H1 (cell line): ENCODE measurements at regions of chr1 and their contacts with region 1.

Region 1: DNA sequence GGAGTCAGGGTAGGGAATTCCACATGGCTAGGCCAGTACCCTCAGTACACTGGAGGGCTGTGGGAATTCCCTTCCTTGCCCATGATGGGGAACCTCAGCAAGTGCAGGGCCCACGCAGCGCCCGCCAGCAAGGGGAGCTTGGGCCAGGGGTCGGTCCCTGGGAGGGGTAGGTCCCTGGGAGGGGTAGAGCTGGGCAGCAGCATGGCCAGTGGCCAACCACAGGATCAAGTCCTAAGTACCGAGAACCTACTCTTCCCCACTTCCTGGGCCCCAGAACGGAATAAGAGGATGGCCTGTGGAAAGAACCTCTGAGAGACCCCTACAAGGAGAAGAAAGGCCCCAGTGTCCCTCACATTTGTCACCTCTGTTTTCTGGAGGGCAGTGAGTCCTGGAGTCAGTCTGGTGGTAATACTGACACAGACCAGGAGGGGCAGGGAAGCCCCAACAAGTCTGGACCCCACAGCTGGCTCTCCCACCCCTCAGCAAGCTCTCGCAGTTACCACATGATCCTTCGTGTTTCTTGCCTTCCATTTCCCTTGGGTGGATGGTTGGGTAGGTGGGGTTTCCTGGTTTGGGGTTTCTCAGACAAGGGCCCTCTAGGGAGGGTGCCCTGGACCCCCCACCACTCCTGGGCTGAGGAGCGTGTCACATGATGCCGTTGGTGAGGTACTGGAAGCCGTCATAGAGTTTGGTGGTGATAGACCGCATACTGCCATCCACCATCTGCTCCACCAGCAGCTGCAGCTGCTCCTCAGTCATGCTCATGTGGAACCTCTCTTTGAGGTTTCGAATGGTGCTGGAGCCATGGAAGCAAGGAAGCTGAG is 10.3 kb downstream of the ZNF687 start:
- DNase-seq: no peak
- H3K4me3 ChIP-seq: no peak overlapping the region
- H3K27ac ChIP-seq: no peak overlapping the region
- H3K4me1 ChIP-seq: peaks cover 6 to 21% (median 15%) of the 10 kb centered on the region in 4 experiments
- H3K27me3 ChIP-seq: no peaks in the 10 kb centered on the region
- CTCF ChIP-seq: peak; percentile 23 to 38 (median 28); a peak in 3 of 4 replicates
- EP300 ChIP-seq: no peak
- POLR2A ChIP-seq: peak; percentile 51 to 53
- RAD21 ChIP-seq: peak; percentile 6 to 27; a peak in 2 of 4 replicates

Region 2: GRCh38 chr1:151243683-151244216 is 48.7 kb before region 1 on chr1:
- CTCF ChIA-PET with region 1: no interaction called
- POLR2A ChIA-PET with region 1: no interaction called
- DNase-seq: no peak
- H3K4me3 ChIP-seq: no peak overlapping the region
- H3K27ac ChIP-seq: no peak overlapping the region
- H3K4me1 ChIP-seq: no peaks in the 10 kb centered on the region
- H3K27me3 ChIP-seq: no peaks in the 10 kb centered on the region
- CTCF ChIP-seq: no peak
- EP300 ChIP-seq: no peak
- POLR2A ChIP-seq: no peak
- RAD21 ChIP-seq: no peak

Region 3: GRCh38 chr1:151311589-151312331 is 19.3 kb after region 1 on chr1:
- CTCF ChIA-PET with region 1: interaction called, 15 read pairs
- POLR2A ChIA-PET with region 1: interaction called, 10 read pairs
- DNase-seq: no peak
- H3K4me3 ChIP-seq: no peak overlapping the region
- H3K27ac ChIP-seq: no peak overlapping the region
- H3K4me1 ChIP-seq: 0 out of 7 replicates have a peak, but pooled peaks cover 0 to 3% (median 0%) of the 10 kb centered on the region in 4 experiments
- H3K27me3 ChIP-seq: no peaks in the 10 kb centered on the region
- CTCF ChIP-seq: no peak
- EP300 ChIP-seq: no peak
- POLR2A ChIP-seq: no peak
- RAD21 ChIP-seq: no peak

Region 4: GRCh38 chr1:151356696-151357095 is 64.3 kb after region 1 on chr1:
- CTCF ChIA-PET with region 1: no interaction called
- POLR2A ChIA-PET with region 1: no interaction called
- DNase-seq: no peak
- H3K4me3 ChIP-seq: no peak overlapping the region
- H3K27ac ChIP-seq: no peak overlapping the region
- H3K4me1 ChIP-seq: no peaks in the 10 kb centered on the region
- H3K27me3 ChIP-seq: no peaks in the 10 kb centered on the region
- CTCF ChIP-seq: no peak
- EP300 ChIP-seq: no peak
- POLR2A ChIP-seq: no peak
- RAD21 ChIP-seq: no peak